ENCODE measurements at regions of chr13 and their contacts with region 1.

Region 1: GRCh38 chr13:74056801-74057542 is 77.2 kb downstream of the KLF12 start:
- DNase-seq: no peak

Region 2: DNA sequence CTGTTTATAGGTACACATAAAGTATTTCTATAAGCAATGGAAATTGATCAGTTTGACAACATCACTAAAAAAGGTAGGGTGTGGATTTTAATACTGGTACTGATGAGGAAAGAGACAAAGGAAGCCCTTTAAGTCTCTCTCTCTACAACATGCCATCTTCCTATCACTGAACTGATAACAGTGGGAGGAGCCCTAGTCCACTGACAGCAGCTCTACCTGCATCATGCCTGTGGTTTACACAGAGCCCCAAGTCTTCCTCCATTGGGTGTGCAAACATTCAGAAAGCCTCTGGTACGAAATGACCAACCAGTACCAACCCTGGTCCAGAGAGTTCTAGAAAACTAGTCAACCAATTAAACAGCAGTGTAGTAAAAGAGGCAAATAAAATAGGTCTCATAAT is 23.8 kb after region 1 on chr13:
- intact Hi-C with region 1: loop called (anchors 2 kb)
- DNase-seq: no peak

Measured in cardiac septum (tissue), 1 donor.